ENCODE measurements at regions of chr3 and their contacts with region 1.

Region 1: GRCh38 chr3:171772427-171773056 is 37.7 kb downstream of the PLD1 start:
- DNase-seq: peak; percentile 62 to 64
- H3K4me3 ChIP-seq: no peak overlapping the region
- H3K27ac ChIP-seq: no peak overlapping the region
- H3K4me1 ChIP-seq: peaks cover 8% of the 10 kb centered on the region; the same call in 1 of the 2 replicates
- H3K27me3 ChIP-seq: no peaks in the 10 kb centered on the region
- CTCF ChIP-seq: peak; percentile 89

Region 2: DNA sequence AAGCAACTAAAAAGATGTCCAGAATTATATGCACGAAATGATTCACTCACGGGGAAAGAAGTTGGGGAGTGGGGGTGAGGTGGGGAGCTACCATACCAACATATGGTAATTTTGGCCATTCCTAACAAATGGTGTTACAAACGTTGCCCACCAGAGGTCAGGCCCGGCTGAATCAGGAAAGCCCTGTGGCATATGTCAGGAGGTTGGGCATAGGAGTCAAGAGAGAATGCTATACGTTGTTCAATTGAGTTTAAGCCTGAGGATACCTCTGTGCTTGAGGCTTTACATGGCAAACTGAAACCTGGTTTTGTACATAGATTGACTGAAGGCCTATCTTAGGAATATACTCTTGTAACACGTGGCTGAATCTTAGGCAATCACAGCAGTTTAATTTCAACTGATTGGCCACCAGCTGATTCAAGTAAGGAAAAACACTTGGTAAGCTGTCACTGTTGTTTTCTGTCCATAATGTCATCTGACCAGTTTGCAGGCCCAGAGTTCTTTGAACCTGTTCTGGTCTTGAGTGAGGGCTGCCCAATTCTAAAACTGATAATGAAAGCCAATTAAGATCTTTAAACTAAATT is 722.6 kb before region 1 on chr3:
- CTCF ChIA-PET with region 1: interaction called, 7 read pairs
- POLR2A ChIA-PET with region 1: no interaction called
- intact Hi-C with region 1: loop called (anchors 2 kb)
- DNase-seq: peak; percentile 53 to 64
- H3K4me3 ChIP-seq: no peak overlapping the region
- H3K27ac ChIP-seq: no peak overlapping the region
- H3K4me1 ChIP-seq: peaks cover 24% of the 10 kb centered on the region
- H3K27me3 ChIP-seq: no peaks in the 10 kb centered on the region
- CTCF ChIP-seq: peak; percentile 86

Region 3: GRCh38 chr3:171187706-171188290 is 584.7 kb before region 1 on chr3:
- CTCF ChIA-PET with region 1: interaction called, 3 read pairs
- POLR2A ChIA-PET with region 1: no interaction called
- intact Hi-C with region 1: loop called (anchors 5 kb)
- DNase-seq: peak in 1 of 2 experiments; percentile 50
- H3K4me3 ChIP-seq: no peak overlapping the region
- H3K27ac ChIP-seq: no peak overlapping the region
- H3K4me1 ChIP-seq: peaks cover 44% of the 10 kb centered on the region
- H3K27me3 ChIP-seq: no peaks in the 10 kb centered on the region
- CTCF ChIP-seq: peak; percentile 81

Region 4: DNA sequence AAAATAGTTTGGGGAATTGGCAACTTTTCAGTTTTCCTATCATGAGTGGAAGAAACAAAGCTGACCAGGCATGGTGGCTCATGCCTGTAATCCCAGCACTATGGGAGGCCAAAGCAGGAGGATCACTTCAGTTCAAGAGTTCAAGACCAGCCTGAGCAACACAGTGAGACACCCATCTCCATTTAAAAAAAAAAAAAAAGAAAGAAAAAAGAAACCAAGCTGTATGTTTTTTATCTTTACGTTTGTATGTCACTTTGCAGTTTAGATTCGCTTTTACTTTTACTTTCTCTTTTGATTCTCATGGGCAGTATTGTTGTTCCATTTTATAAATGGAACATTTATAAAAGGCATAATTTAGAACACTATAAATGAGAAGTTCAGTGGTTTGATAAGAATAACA is 281.2 kb before region 1 on chr3:
- CTCF ChIA-PET with region 1: interaction called, 10 read pairs
- POLR2A ChIA-PET with region 1: no interaction called
- intact Hi-C with region 1: no loop called
- DNase-seq: no peak
- H3K4me3 ChIP-seq: no peak overlapping the region
- H3K27ac ChIP-seq: no peak overlapping the region
- H3K4me1 ChIP-seq: peaks cover 13% of the 10 kb centered on the region
- H3K27me3 ChIP-seq: no peaks in the 10 kb centered on the region
- CTCF ChIP-seq: no peak

Region 5: DNA sequence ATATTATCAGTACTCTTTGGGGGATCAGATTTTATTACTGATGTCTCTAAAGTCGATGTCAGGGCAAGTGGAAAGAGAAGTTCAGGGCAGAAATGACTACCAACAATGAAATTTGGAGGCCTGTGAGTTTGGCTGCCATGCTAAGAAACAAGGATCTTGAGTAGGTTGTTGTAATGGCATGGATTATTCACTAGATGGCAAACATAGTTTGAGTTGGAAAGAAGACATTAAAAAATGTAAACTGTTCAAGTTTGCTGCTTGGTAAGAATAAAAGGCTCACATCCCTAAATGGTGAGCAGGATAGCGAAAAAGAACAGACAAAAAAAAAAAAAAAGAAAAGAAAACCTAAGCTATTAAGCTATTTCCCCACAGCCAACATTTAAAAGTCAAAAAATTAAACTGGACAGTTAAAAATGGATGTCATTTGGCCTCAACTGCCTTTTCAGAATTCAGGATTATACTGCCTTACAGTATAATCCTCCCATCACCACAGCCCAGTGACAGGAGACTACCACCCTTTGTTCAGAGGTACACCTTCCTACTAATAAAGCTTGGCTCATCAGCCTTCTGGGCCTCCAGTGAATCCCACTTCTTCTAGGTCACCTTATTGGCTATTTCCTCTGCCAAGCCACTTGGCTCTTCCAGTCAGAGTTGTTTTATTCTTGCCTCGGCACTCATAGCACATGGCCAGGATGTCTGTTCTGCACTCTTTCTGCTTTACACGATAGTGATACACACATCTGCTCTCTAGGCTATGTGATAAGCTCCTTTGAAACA is 126.0 kb before region 1 on chr3:
- CTCF ChIA-PET with region 1: interaction called, 4 read pairs
- POLR2A ChIA-PET with region 1: interaction called, 4 read pairs
- intact Hi-C with region 1: loop called (anchors 1 kb)
- DNase-seq: peak in 1 of 2 experiments; percentile 51
- H3K4me3 ChIP-seq: no peak overlapping the region
- H3K27ac ChIP-seq: no peak overlapping the region
- H3K4me1 ChIP-seq: no peaks in the 10 kb centered on the region
- H3K27me3 ChIP-seq: no peaks in the 10 kb centered on the region
- CTCF ChIP-seq: peak; percentile 90

Region 6: DNA sequence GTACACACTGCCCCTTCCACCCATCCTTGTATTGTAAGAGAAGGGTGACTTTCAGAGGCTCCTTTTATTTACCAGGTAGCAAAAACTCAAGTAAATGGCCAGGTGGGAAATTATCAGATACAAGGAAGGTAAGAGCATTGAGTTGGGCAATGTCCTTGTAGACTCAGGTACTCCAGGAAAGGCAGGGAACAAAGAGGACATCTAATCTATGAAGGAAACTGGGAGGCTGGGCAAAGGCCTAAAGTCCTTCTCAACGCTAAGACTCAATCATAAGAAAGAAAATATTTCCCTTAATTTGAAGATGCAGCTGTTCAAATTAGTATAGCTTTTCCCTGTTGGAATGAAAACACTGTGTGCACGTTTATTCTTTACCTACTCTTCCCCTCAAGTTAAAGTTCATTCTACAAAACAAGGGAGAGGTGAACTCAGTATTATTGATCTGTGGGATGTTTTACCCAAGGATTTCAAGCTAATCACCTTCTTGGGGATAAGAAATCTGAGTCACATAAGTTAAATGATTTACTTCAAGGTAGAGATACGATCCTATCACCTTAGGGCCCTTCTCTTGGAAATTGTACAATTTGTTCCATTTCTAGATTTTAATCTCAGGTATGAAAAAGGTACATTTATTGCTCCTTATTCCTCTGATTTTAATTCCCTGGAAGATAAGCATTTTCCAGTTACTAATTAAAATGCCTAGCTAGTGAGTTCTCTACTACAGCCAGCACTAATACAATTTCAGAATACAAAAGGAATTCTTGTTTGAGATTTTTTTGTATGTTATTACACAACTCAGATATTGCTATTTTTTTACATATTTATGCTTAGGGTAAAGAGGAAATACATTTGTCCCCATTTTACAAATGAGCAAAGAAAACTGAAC is 42.8 kb before region 1 on chr3:
- CTCF ChIA-PET with region 1: no interaction called
- POLR2A ChIA-PET with region 1: no interaction called
- intact Hi-C with region 1: no loop called
- DNase-seq: no peak
- H3K4me3 ChIP-seq: no peak overlapping the region
- H3K27ac ChIP-seq: no peak overlapping the region
- H3K4me1 ChIP-seq: no peaks in the 10 kb centered on the region
- H3K27me3 ChIP-seq: no peaks in the 10 kb centered on the region
- CTCF ChIP-seq: no peak

Region 7: DNA sequence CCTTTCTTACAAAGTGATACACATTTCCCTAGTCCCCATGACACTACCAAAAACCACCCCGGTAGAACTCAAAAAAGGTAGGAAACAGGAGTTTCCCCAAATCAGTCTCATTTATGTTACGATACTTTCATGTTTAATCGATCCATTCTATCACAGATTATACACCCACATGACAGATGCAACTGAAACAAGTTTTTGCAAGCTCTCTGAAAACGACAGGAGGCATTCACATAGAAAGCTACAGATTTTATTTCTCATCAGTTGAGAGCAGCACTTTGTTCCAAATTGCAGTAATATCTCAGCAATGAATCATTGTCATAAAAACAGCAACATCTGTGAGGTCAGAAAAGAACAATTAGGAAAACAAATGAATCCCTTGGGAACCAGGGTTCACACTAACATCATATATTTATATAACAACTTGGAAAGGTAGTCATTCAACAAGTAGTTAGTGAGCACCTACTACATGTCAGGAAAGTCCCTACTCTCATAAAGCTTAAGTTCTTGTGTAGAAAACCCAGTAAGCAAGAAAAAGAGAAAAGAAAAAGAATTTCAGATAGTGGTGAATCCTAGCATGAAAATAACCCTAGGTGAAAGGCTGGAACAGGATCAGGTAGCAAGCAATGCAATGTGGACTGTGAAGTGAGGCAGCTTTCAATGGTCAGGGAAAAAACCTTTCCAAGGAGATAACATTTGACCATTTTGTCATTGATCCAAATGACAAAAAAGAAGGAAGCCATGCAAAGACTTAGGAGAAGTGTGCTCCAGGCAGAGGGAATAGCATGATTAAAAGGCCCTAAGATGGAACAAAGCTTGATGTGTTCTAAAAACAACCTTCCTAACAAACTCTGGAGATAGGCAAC is 29.4 kb after region 1 on chr3:
- CTCF ChIA-PET with region 1: interaction called, 12 read pairs
- POLR2A ChIA-PET with region 1: interaction called, 4 read pairs
- intact Hi-C with region 1: no loop called
- DNase-seq: peak in 1 of 2 experiments; percentile 98
- H3K4me3 ChIP-seq: no peak overlapping the region; the same call in 1 of the 2 replicates
- H3K27ac ChIP-seq: peak overlapping the region; percentile 93
- H3K4me1 ChIP-seq: peaks cover 88% of the 10 kb centered on the region
- H3K27me3 ChIP-seq: no peaks in the 10 kb centered on the region
- CTCF ChIP-seq: no peak

Region 8: DNA sequence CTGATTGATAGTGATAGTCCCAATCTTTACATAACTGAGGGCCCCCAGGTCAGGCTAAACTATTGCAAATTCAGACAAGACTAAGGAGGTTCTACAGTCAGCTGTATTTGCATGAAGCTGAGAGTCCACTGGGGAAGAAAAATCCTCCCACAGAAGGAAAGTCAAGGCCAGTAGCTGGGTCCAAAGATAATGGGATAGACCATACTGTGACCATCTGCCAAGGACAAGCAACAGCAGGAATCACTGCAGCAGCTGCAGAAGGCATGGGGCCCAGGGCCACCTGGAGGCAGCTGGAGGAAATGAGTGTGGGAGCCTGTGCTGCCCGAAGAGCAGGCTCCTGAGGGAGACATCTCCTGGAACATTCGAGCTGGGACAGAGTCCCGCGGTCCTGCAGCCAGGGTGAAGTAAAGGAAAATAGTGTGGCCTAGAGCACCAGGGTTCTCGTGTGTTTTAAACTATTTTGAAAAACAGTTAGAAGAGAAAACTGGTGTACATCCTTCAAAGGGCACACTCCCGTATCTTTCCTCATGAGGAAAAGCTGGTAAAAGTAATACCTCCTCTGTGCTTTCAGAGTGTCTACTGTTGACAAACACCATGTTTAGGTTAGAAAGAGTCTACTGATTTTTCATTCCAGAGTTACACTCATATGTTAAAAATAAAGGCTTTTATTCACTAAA is 57.4 kb after region 1 on chr3:
- CTCF ChIA-PET with region 1: interaction called, 29 read pairs
- POLR2A ChIA-PET with region 1: no interaction called
- intact Hi-C with region 1: loop called (anchors 2 kb)
- DNase-seq: peak; percentile 54 to 77
- H3K4me3 ChIP-seq: no peak overlapping the region
- H3K27ac ChIP-seq: no peak overlapping the region
- H3K4me1 ChIP-seq: peaks cover 26% of the 10 kb centered on the region
- H3K27me3 ChIP-seq: no peaks in the 10 kb centered on the region
- CTCF ChIP-seq: peak; percentile 77

Region 9: DNA sequence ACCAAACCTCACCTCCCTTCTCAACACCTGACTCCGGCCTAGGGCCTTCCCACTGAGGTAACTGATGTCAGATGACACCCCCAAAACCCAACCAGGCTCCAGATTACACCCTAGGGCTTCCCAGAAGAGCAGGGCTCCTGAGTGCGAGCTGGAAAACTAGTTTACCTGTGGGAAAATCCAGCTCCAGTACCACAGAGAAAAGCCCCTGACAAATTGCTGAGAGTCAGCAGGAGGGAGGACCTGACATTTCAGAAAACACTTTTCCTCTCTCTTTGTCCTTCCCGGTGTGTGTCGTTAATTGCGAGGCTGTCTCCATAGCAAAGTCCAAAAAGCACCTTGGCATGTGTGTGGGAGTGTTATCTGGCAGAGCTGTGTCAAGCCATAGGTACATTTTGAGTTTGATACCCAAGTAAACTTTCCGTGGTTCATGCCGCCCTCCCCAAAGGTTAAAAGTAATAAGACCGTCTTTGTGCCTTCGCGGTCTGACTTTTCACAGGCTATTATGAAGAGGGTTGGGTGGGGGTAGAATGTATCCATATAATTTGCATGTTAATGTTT is 187.1 kb after region 1 on chr3:
- CTCF ChIA-PET with region 1: no interaction called
- POLR2A ChIA-PET with region 1: no interaction called
- intact Hi-C with region 1: no loop called
- DNase-seq: no peak
- H3K4me3 ChIP-seq: 0 out of 2 replicates have a peak overlapping the region, but pooled peaks have one; percentile 14
- H3K27ac ChIP-seq: peak overlapping the region; percentile 91
- H3K4me1 ChIP-seq: peaks cover 36% of the 10 kb centered on the region
- H3K27me3 ChIP-seq: no peaks in the 10 kb centered on the region
- CTCF ChIP-seq: no peak

Region 10: GRCh38 chr3:172009803-172010202 is 237.3 kb after region 1 on chr3:
- CTCF ChIA-PET with region 1: no interaction called
- POLR2A ChIA-PET with region 1: no interaction called
- intact Hi-C with region 1: no loop called
- DNase-seq: no peak
- H3K4me3 ChIP-seq: no peak overlapping the region
- H3K27ac ChIP-seq: no peak overlapping the region
- H3K4me1 ChIP-seq: peaks cover 10% of the 10 kb centered on the region; the same call in 1 of the 2 replicates
- H3K27me3 ChIP-seq: no peaks in the 10 kb centered on the region
- CTCF ChIP-seq: no peak

Region 11: GRCh38 chr3:173078525-173078924 is 1306.0 kb after region 1 on chr3:
- CTCF ChIA-PET with region 1: no interaction called
- POLR2A ChIA-PET with region 1: no interaction called
- intact Hi-C with region 1: no loop called
- DNase-seq: no peak
- H3K4me3 ChIP-seq: no peak overlapping the region
- H3K27ac ChIP-seq: no peak overlapping the region
- H3K4me1 ChIP-seq: no peaks in the 10 kb centered on the region
- H3K27me3 ChIP-seq: no peaks in the 10 kb centered on the region
- CTCF ChIP-seq: no peak

Measured in PC-9 (cell line).